AG04450 (cell line): ENCODE measurements at regions of chr20 and their contacts with region 1.

Region 1: DNA sequence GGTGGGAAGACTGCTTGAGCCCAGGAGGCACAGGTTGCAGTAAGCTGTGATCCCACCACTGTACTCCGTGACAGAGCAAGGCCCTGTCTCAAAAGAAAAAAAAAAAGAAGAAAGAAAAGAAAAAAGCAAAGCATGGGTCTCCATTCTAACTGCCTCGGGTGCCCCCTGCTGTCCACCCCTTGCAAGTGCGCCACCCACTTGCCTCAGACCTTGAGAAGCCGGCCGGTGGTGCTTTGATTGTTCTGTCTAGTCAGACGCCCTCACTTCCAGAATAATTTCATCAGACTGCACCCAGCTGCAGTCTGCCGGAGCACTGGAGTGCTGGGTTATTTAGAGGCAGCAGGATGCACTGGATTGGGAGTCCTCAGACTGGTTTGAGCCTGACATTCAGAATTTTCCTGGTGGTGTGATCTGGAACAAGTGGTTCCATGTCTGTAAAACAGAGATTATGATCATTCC is 17.6 kb upstream of the TM9SF4 start:
- DNase-seq: peak; percentile 47
- H3K4me3 ChIP-seq: no peak overlapping the region
- H3K27ac ChIP-seq: no peak overlapping the region
- H3K27me3 ChIP-seq: peaks cover 42% of the 10 kb centered on the region
- CTCF ChIP-seq: peak; percentile 94

Region 2: GRCh38 chr20:31822421-31823330 is 269.2 kb before region 1 on chr20:
- CTCF ChIA-PET with region 1: interaction called, 16 read pairs
- POLR2A ChIA-PET with region 1: no interaction called
- DNase-seq: no peak
- H3K4me3 ChIP-seq: peak overlapping the region; percentile 13; the same call in 1 of the 2 replicates
- H3K27ac ChIP-seq: no peak overlapping the region
- H3K27me3 ChIP-seq: peaks cover 2% of the 10 kb centered on the region
- CTCF ChIP-seq: peak; percentile 94

Region 3: GRCh38 chr20:31920102-31920855 is 171.6 kb before region 1 on chr20:
- CTCF ChIA-PET with region 1: no interaction called
- POLR2A ChIA-PET with region 1: no interaction called
- DNase-seq: no peak
- H3K4me3 ChIP-seq: no peak overlapping the region
- H3K27ac ChIP-seq: no peak overlapping the region
- H3K27me3 ChIP-seq: peaks cover 36% of the 10 kb centered on the region
- CTCF ChIP-seq: no peak

Region 4: GRCh38 chr20:32079655-32080109 is 12.2 kb before region 1 on chr20:
- CTCF ChIA-PET with region 1: interaction called, 17 read pairs
- POLR2A ChIA-PET with region 1: no interaction called
- DNase-seq: no peak
- H3K4me3 ChIP-seq: no peak overlapping the region
- H3K27ac ChIP-seq: no peak overlapping the region
- H3K27me3 ChIP-seq: peaks cover 36% of the 10 kb centered on the region
- CTCF ChIP-seq: no peak

Region 5: GRCh38 chr20:32109392-32110172 is 17.7 kb after region 1 on chr20 and contains the start of gene TM9SF4:
- CTCF ChIA-PET with region 1: interaction called, 28 read pairs
- POLR2A ChIA-PET with region 1: interaction called, 3 read pairs
- DNase-seq: peak; percentile 87
- H3K4me3 ChIP-seq: peak within 1 kb of the TSS; percentile 92
- H3K27ac ChIP-seq: peak within 1 kb of the TSS; percentile 100
- H3K27me3 ChIP-seq: peaks cover 4% of the 10 kb centered on the region
- CTCF ChIP-seq: no peak
- polyA plus RNA-seq, gene TM9SF4: 75.6 and 83.9 TPM in 2 replicates